Activated T-helper 2 cell treated with anti-CD3 and anti-CD28 coated beads, Interferon-gamma antibody, Interleukin-2, Interleukin-4, amounts not matched to agents 10 μg/mL and 5 μg/mL and 100 μg/mL, durations not matched to agents 14 hours and 24 hours and 36 hours (primary cell): ENCODE measurements at regions of chr1 and their contacts with region 1.

Region 1: DNA sequence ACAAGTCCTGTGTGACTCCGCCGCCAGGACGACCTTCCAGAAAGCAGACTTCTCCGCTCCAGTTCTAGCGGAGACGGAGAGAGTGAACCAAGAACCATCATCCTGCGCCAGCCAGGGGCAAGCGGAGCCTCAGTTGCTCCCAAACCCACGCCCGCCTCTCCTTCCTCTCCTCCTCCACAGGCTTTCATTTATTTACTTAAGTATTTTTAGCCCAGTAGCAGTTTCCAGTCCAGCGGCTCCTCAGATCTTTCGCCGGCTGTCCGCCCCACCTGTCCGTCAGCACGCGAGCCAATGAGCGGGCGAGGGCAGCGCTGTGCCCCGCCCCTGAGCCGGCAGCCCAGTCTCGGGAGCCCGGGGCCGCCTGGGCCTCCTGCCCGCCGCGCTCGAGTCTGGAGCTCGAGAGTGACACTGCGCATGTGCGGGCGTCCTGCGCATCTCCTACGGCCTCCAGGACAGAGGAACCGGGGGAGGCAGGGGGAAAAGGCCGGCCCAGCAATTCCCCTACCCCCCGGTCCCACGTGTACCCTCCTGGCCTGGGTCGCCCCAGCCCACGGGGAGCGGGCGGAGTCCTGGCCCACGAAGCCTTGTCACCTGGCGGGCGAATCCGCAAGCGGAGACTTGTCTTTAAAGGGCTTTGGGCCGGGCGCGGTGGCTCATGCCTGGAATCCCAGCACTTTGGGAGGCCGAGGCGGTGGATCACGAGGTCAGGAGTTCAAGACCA is at the start of gene FALEC:
- DNase-seq: peak; percentile 89
- H3K4me3 Mint-ChIP-seq: peak within 1 kb of the TSS; percentile 76
- H3K27ac Mint-ChIP-seq: peak within 1 kb of the TSS; percentile 57
- H3K4me1 Mint-ChIP-seq: peaks cover 12% of the 10 kb centered on the region
- H3K27me3 Mint-ChIP-seq: no peaks in the 10 kb centered on the region
- total RNA-seq, gene FALEC: 0.37 and 1.9 TPM in 2 replicates

Region 2: GRCh38 chr1:150464422-150464826 is 51.1 kb before region 1 on chr1:
- intact Hi-C with region 1: loop called (anchors 1 kb)
- DNase-seq: peak; percentile 53
- H3K4me3 Mint-ChIP-seq: no peak overlapping the region
- H3K27ac Mint-ChIP-seq: no peak overlapping the region
- H3K4me1 Mint-ChIP-seq: peaks cover 2% of the 10 kb centered on the region
- H3K27me3 Mint-ChIP-seq: no peaks in the 10 kb centered on the region

Region 3: GRCh38 chr1:150486964-150487762 is 28.3 kb before region 1 on chr1 and contains the start of gene TARS2:
- intact Hi-C with region 1: loop called (anchors 2 kb)
- DNase-seq: peak; percentile 95
- H3K4me3 Mint-ChIP-seq: peak within 1 kb of the TSS; percentile 98
- H3K27ac Mint-ChIP-seq: peak within 1 kb of the TSS; percentile 98
- H3K4me1 Mint-ChIP-seq: peaks cover 18% of the 10 kb centered on the region
- H3K27me3 Mint-ChIP-seq: no peaks in the 10 kb centered on the region
- total RNA-seq, gene TARS2: 66.2 and 69.8 TPM in 2 replicates

Region 4: GRCh38 chr1:150532868-150533302 is 17.4 kb after region 1 on chr1:
- intact Hi-C with region 1: loop called (anchors 1 kb)
- DNase-seq: no peak
- H3K4me3 Mint-ChIP-seq: no peak overlapping the region
- H3K27ac Mint-ChIP-seq: no peak overlapping the region
- H3K4me1 Mint-ChIP-seq: peaks cover 6% of the 10 kb centered on the region
- H3K27me3 Mint-ChIP-seq: no peaks in the 10 kb centered on the region

Region 5: DNA sequence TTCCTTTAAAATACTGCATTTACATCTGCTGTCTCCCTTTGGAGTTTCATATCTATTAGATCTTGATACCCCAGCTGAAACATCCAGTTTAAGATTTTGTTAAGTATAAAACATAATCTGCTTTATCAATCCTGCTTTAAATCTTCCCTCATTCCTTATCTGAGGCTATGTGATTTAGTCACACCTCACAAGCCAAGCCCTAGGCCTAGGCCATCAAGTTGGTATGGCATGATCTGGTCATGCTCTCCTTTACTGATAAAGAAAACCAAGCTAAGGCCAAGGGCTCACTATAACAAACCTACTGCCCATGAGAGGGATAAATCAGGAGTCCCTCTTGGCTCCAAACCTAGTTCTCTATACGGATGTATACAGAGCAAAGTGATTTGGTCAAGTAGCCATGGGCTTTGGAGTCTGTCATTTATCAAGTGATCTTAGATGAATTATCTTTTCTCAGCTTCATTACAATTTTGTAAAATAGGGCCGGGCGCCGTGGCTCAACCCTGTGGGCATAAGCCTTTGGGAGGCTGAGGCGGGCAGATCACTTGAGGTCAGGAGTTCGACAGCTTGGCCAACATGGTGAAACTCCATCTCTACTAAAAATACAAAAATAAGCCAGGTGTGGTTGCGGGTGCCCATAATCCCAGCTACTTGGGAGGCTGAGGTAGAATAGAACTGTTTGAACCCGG is 91.1 kb after region 1 on chr1:
- intact Hi-C with region 1: no loop called
- DNase-seq: no peak
- H3K4me3 Mint-ChIP-seq: no peak overlapping the region
- H3K27ac Mint-ChIP-seq: peak overlapping the region; percentile 61
- H3K4me1 Mint-ChIP-seq: peaks cover 30% of the 10 kb centered on the region
- H3K27me3 Mint-ChIP-seq: no peaks in the 10 kb centered on the region